ENCODE measurements at regions of chr5 and their contacts with region 1.

Region 1: DNA sequence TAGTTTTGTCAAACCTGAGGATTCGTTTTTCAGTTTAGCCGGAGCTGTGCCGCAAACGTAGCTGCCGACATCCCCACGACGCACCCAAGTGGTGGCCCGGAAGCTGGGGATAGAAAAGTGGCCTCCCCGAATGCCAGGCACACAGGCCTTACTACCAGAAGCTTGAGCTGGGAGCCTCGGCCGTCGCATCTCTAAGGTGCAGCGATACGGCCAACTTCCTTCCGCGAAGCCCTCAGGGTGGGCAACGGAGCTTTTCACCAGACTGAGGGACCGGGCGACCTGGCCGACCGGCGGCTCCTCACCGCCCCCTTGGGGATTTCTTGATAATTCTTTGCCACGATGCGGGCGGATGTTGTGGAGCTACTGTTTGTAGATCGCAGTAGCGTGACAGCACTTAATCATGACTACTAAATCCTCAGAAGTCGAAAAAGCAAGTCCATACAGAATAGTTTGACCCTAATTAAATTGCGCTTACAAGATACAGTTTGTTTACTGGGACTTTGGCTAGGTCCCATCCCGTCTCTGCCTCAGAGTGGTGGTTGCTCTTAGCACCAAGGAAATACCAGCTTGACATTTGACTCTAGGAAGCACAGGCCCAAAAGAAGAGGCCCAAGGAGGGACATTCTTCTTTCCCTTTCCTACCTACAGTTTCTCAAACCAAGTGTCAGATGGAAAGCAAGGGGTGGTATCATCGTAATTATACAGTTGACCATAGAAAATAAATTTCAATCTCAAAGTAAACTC is 613 bp upstream of the TMEM267 start:
- DNase-seq: peak; percentile 60
- ATAC-seq: peak; percentile 82
- H3K4me3 ChIP-seq: peak overlapping the region; percentile 80
- H3K27ac ChIP-seq: peak overlapping the region; percentile 100
- H3K4me1 ChIP-seq: peaks cover 3% of the 10 kb centered on the region
- H3K27me3 ChIP-seq: no peaks in the 10 kb centered on the region
- CTCF ChIP-seq: peak; percentile 56 to 82 (median 69)
- EP300 ChIP-seq: 0 out of 4 replicates have a peak, but pooled peaks of 1 of the 2 experiments have one; percentile 7
- POLR2A ChIP-seq: peak; percentile 61
- RAD21 ChIP-seq: peak; percentile 58

Region 2: DNA sequence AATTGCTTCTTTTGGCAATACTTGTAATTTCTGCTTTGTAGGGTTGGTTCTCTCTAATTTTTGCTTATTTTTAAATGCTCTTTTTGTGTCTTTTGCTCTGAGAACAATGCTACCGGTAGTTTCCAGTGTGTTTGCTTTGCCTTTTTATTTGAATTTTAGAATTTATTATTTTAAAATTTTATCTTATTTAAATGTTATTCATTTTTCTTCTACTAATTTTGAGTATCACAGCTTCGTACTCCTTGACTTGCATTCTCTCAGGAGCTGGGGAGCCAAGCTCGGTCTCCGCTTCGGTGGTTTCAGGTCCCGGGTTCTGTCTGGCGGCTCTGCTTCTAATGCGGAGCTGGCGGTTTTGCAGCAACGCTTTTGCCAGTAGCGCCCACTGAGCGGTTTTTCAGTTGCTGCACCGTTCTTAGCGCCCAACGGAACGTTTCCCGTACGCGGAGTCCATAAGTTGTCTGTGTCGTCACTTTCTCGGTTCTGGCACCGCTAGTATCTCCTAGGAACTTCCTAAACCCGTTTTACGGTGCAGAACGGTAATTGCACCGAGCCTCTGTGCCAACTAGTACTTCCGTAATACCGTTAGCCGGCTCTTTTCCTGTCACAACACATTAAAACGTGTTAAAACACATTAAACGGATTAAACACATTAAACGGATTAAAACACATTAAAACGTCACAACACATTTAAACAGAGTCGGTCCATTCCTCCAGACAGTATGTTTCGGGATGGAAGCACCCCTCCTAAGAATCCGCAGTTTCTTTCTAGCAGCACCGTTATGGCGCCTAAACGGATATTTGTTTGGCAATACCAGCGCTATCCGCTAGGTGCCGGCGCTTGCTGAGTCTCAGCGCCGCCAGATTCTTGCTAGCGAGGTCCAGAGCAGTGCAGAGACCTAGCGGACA is 489.8 kb before region 1 on chr5:
- CTCF ChIA-PET with region 1: interaction called, 3 read pairs
- POLR2A ChIA-PET with region 1: no interaction called
- RAD21 ChIA-PET with region 1: no interaction called
- SMC1A ChIA-PET with region 1: interaction called, 3 read pairs
- in situ Hi-C with region 1: no loop called
- intact Hi-C with region 1: loop called (anchors 5 kb)
- DNase-seq: no peak
- ATAC-seq: peak; percentile 72
- H3K4me3 ChIP-seq: peak overlapping the region; percentile 82
- H3K27ac ChIP-seq: peak overlapping the region; percentile 94
- H3K4me1 ChIP-seq: peaks cover 12% of the 10 kb centered on the region
- H3K27me3 ChIP-seq: no peaks in the 10 kb centered on the region
- CTCF ChIP-seq: peak; percentile 89 to 94 (median 90)
- EP300 ChIP-seq: 0 out of 4 replicates have a peak, but pooled peaks of 1 of the 2 experiments have one; percentile 13
- POLR2A ChIP-seq: 0 out of 2 replicates have a peak, but pooled peaks have one; percentile 29
- RAD21 ChIP-seq: peak; percentile 75

Region 3: DNA sequence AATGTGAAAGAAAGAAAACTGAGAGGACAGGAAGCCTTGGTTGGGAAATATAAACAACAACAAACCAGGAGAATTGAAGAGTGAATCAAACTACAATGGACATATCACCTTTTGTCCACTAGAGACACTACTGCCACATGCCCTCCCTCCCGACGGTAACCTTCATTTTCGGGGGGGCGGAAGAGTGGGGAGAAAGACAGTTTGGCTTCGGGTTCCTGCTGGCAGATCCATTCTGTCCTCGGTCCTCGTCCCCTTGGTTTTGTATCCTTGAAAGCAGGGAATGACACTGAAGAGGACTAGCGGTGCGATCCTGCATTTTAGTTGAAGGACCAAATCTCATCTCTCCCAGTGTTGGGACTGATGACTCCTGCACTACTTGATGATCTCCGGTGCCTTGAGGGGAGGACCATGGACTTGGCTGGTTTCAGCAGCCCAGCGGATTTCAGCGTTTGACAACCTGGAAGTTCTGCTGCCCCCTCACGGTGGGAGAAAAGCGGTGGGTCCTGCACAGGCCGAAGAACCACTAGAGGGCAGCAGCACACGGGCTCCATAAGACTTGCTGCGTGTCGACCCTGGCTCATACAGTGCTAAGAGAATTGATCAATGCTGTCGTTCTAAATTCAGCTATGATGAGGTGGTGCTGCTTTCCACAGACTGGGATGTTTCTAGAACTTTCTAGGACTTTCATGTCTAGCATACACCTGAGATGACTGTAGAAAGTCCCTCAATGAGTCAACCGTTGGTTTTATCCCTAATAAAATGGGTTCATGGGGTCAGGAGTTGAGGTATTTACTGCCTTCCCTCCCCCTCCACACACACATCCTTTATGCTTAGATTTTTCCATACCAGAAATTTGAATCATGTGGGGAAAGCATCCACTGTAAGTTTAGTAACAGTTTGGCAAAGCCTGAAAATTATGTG is 378.6 kb before region 1 on chr5:
- CTCF ChIA-PET with region 1: interaction called, 14 read pairs
- POLR2A ChIA-PET with region 1: no interaction called
- RAD21 ChIA-PET with region 1: interaction called, 3 read pairs
- SMC1A ChIA-PET with region 1: no interaction called
- in situ Hi-C with region 1: no loop called
- intact Hi-C with region 1: loop called (anchors 2 kb)
- DNase-seq: peak; percentile 79
- ATAC-seq: peak; percentile 99
- H3K4me3 ChIP-seq: peak overlapping the region; percentile 73
- H3K27ac ChIP-seq: peak overlapping the region; percentile 55
- H3K4me1 ChIP-seq: peaks cover 5% of the 10 kb centered on the region
- H3K27me3 ChIP-seq: no peaks in the 10 kb centered on the region
- CTCF ChIP-seq: peak; percentile 100
- EP300 ChIP-seq: no peak
- POLR2A ChIP-seq: peak; percentile 26; the same call in 1 of the 2 replicates
- RAD21 ChIP-seq: peak; percentile 93

Region 4: GRCh38 chr5:43227655-43228054 is 256.6 kb before region 1 on chr5:
- CTCF ChIA-PET with region 1: interaction called, 10 read pairs
- POLR2A ChIA-PET with region 1: no interaction called
- RAD21 ChIA-PET with region 1: interaction called, 5 read pairs
- SMC1A ChIA-PET with region 1: no interaction called
- in situ Hi-C with region 1: no loop called
- intact Hi-C with region 1: no loop called
- DNase-seq: no peak
- ATAC-seq: peak; percentile 18; the same call in 1 of the 3 replicates
- H3K4me3 ChIP-seq: no peak overlapping the region
- H3K27ac ChIP-seq: no peak overlapping the region
- H3K4me1 ChIP-seq: no peaks in the 10 kb centered on the region
- H3K27me3 ChIP-seq: no peaks in the 10 kb centered on the region
- CTCF ChIP-seq: peak; percentile 17 to 50 (median 22); a peak in 4 of 6 replicates
- EP300 ChIP-seq: no peak
- POLR2A ChIP-seq: no peak
- RAD21 ChIP-seq: peak; percentile 72

Region 5: GRCh38 chr5:43376496-43377140 is 107.7 kb before region 1 on chr5:
- CTCF ChIA-PET with region 1: no interaction called
- POLR2A ChIA-PET with region 1: no interaction called
- RAD21 ChIA-PET with region 1: no interaction called
- SMC1A ChIA-PET with region 1: no interaction called
- in situ Hi-C with region 1: no loop called
- intact Hi-C with region 1: no loop called
- DNase-seq: no peak
- ATAC-seq: no peak
- H3K4me3 ChIP-seq: no peak overlapping the region
- H3K27ac ChIP-seq: no peak overlapping the region
- H3K4me1 ChIP-seq: no peaks in the 10 kb centered on the region
- H3K27me3 ChIP-seq: no peaks in the 10 kb centered on the region
- CTCF ChIP-seq: no peak
- EP300 ChIP-seq: no peak
- POLR2A ChIP-seq: no peak
- RAD21 ChIP-seq: no peak

Region 6: GRCh38 chr5:43396762-43397304 is 87.4 kb before region 1 on chr5:
- CTCF ChIA-PET with region 1: interaction called, 12 read pairs
- POLR2A ChIA-PET with region 1: interaction called, 3 read pairs
- RAD21 ChIA-PET with region 1: interaction called, 5 read pairs
- SMC1A ChIA-PET with region 1: interaction called, 11 read pairs
- in situ Hi-C with region 1: no loop called
- intact Hi-C with region 1: loop called (anchors 2 kb)
- DNase-seq: peak; percentile 17
- ATAC-seq: peak; percentile 94
- H3K4me3 ChIP-seq: peak overlapping the region; percentile 64
- H3K27ac ChIP-seq: peak overlapping the region; percentile 52
- H3K4me1 ChIP-seq: no peaks in the 10 kb centered on the region
- H3K27me3 ChIP-seq: no peaks in the 10 kb centered on the region
- CTCF ChIP-seq: no peak
- EP300 ChIP-seq: no peak
- POLR2A ChIP-seq: peak; percentile 68
- RAD21 ChIP-seq: no peak

Region 7: GRCh38 chr5:43514816-43515677 is 30.8 kb after region 1 on chr5 and contains the start of gene C5orf34:
- CTCF ChIA-PET with region 1: interaction called, 20 read pairs
- POLR2A ChIA-PET with region 1: interaction called, 24 read pairs
- RAD21 ChIA-PET with region 1: interaction called, 7 read pairs
- SMC1A ChIA-PET with region 1: interaction called, 12 read pairs
- in situ Hi-C with region 1: no loop called
- intact Hi-C with region 1: loop called (anchors 1 kb)
- DNase-seq: peak; percentile 79
- ATAC-seq: peak; percentile 94
- H3K4me3 ChIP-seq: peak within 1 kb of the TSS; percentile 92
- H3K27ac ChIP-seq: peak within 1 kb of the TSS; percentile 74
- H3K4me1 ChIP-seq: no peaks in the 10 kb centered on the region
- H3K27me3 ChIP-seq: no peaks in the 10 kb centered on the region
- CTCF ChIP-seq: no peak
- EP300 ChIP-seq: no peak
- POLR2A ChIP-seq: peak; percentile 80
- RAD21 ChIP-seq: no peak
- polyA plus RNA-seq, gene C5orf34: 7.4 to 8.8 TPM

Region 8: GRCh38 chr5:43602461-43603343 is 118.4 kb after region 1 on chr5 and contains the start of gene NNT:
- CTCF ChIA-PET with region 1: interaction called, 15 read pairs
- POLR2A ChIA-PET with region 1: interaction called, 15 read pairs
- RAD21 ChIA-PET with region 1: interaction called, 11 read pairs
- SMC1A ChIA-PET with region 1: interaction called, 9 read pairs
- in situ Hi-C with region 1: no loop called
- intact Hi-C with region 1: loop called (anchors 10 kb)
- DNase-seq: no peak
- ATAC-seq: peak; percentile 87
- H3K4me3 ChIP-seq: peak within 1 kb of the TSS; percentile 93
- H3K27ac ChIP-seq: peak within 1 kb of the TSS; percentile 98
- H3K4me1 ChIP-seq: peaks cover 4% of the 10 kb centered on the region; the same call in 1 of the 2 replicates
- H3K27me3 ChIP-seq: no peaks in the 10 kb centered on the region
- CTCF ChIP-seq: no peak
- EP300 ChIP-seq: no peak
- POLR2A ChIP-seq: peak; percentile 93
- RAD21 ChIP-seq: no peak
- polyA plus RNA-seq, gene NNT: 20.8 to 23.1 TPM